ENCODE measurements at regions of chr1 and their contacts with region 1.

Region 1: GRCh38 chr1:199529324-199529723 is 498.2 kb upstream of the NR5A2 start:
- DNase-seq: no peak
- H3K4me3 ChIP-seq: no peak overlapping the region
- H3K27ac ChIP-seq: no peak overlapping the region
- H3K4me1 ChIP-seq: no peaks in the 10 kb centered on the region
- H3K27me3 ChIP-seq: peaks cover 0 to 4% of the 10 kb centered on the region in 2 experiments
- CTCF ChIP-seq: no peak
- POLR2A ChIP-seq: no peak

Region 2: GRCh38 chr1:199561333-199561732 is 32.0 kb after region 1 on chr1:
- CTCF ChIA-PET with region 1: no interaction called
- POLR2A ChIA-PET with region 1: no interaction called
- dilution Hi-C with region 1: no loop called
- intact Hi-C with region 1: loop called (anchors 1 kb)
- DNase-seq: no peak
- H3K4me3 ChIP-seq: no peak overlapping the region
- H3K27ac ChIP-seq: no peak overlapping the region
- H3K4me1 ChIP-seq: no peaks in the 10 kb centered on the region
- H3K27me3 ChIP-seq: no peaks in the 10 kb centered on the region
- CTCF ChIP-seq: no peak
- POLR2A ChIP-seq: no peak

Region 3: DNA sequence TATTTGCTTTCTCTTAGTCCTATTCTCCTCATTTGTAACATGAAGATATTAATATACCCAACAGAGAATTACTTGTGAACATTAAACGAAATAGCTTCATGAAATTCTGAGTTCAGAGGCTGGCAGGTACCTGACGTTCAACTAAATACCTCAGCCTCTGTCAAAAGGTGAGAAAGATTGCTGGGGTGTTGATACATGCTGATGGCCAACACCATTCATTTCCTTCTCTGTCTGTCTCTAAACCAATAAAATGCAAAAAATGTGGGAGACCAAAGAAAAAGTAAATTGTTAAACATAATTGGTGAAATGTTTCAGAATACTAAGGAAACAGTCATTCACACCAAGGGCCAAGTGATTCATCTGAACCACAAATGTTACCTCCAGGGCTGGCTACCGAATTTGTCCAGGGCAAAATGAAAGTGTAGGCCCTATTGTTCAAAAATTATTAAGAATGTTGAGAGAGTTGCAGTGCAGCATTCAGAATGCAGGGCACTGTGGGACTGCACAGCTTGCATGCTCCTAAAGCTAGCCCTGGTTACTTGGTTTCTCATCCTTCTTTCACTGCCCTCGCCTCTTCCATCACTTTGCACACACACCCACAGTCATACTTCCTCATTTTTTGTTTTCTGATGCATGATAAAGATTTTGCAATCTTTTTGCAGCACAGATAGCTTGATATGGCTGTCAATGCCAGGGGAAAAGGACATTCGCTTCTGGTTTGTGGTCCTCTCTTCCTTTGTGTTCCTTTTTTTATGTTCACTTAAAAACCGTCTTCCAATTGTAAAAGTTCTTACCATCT is 83.9 kb after region 1 on chr1:
- CTCF ChIA-PET with region 1: no interaction called
- POLR2A ChIA-PET with region 1: no interaction called
- dilution Hi-C with region 1: no loop called
- intact Hi-C with region 1: no loop called
- DNase-seq: no peak
- H3K4me3 ChIP-seq: no peak overlapping the region
- H3K27ac ChIP-seq: no peak overlapping the region
- H3K4me1 ChIP-seq: no peaks in the 10 kb centered on the region
- H3K27me3 ChIP-seq: peaks cover 0 to under 1% of the 10 kb centered on the region in 2 experiments
- CTCF ChIP-seq: no peak
- POLR2A ChIP-seq: no peak